ENCODE measurements at regions of chr10 and their contacts with region 1.

Region 1: DNA sequence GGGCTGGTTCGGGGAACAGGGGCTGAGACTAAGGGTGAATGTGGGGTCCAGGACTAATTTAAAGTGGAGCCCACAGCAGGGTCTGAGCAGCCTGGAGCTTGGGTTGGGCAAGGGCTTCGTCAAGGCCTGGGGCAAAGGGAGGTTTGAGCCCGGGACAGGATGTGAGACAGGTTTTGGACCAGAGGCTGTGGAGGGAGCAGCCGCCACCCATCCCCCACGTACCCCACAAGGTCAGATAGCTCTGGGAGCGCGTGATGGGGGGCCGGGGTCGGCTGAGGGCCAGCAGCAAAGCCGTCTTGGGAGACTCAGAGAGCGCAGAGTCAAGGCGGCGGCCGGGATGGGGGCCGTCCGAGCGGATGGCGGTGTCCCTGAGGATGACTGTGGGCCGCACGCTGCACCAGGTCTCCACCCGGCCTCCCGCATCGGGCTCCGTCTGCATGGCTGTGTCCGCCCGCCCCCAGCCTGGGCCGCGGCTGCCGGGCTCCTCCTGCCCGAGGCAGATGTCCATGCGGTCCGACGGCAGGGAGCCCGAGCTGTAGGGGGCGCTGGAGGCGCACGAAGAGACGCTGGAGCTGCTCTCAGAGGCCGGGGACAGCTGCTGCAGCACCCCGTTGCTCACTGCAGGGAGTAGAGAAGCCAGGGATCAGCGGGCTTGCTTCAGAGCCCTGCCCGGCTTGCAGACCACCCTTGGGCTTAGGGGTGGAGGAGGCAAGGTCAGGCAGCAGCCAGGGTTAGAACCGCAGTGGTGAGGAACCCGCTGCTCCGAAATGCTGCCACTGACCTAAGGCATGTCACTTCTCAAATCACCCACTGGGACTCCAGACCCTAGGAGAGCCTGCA is 12.1 kb downstream of the PDZD7 start:
- DNase-seq: no peak
- H3K4me3 ChIP-seq: no peak overlapping the region
- H3K27ac ChIP-seq: no peak overlapping the region
- H3K27me3 ChIP-seq: no peaks in the 10 kb centered on the region
- CTCF ChIP-seq: peak; percentile 78

Region 2: DNA sequence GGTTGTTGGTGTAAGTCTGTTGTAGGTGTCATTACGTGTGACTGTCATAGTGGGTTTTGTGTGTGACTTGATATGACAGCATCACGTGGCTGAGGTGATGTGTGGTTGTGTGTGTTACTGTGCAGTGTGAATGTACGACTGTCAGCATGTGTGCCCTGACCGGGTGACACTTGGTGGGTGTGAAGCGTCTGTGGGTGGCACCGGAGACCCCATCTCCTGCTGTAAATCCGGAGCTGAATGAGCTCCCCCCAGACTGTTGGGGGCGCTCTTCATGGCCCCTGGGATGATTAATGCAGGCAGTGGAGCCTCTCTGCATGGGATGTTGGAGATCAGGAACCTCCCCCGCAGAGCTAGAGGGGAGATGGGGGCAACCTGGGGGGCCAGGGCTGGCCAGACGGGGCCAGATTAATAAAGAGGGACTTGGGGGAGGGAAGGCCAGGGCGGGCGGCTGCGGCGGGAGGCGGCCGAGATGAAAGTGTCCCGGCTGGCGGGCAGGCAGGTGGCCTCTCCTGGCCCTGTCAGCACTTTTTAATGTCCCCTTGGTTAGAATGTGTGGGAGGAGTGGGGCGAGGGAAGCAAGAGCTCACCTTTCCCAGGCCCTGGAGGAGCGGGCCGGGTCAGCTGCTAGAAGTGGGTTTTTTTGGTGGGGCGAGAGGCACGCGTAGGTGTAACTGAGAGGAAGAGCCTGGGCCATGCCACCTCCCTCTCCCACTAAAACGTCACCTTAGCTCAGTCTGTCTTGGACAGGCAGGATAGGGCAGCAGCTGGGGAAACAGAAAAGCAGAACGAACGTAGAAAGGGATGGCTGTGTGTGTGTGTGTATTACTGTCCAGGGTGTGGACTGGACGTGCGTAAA is 449.0 kb before region 1 on chr10:
- CTCF ChIA-PET with region 1: no interaction called
- POLR2A ChIA-PET with region 1: no interaction called
- DNase-seq: no peak
- H3K4me3 ChIP-seq: no peak overlapping the region
- H3K27ac ChIP-seq: no peak overlapping the region
- H3K27me3 ChIP-seq: peaks cover 66% of the 10 kb centered on the region
- CTCF ChIP-seq: no peak

Region 3: DNA sequence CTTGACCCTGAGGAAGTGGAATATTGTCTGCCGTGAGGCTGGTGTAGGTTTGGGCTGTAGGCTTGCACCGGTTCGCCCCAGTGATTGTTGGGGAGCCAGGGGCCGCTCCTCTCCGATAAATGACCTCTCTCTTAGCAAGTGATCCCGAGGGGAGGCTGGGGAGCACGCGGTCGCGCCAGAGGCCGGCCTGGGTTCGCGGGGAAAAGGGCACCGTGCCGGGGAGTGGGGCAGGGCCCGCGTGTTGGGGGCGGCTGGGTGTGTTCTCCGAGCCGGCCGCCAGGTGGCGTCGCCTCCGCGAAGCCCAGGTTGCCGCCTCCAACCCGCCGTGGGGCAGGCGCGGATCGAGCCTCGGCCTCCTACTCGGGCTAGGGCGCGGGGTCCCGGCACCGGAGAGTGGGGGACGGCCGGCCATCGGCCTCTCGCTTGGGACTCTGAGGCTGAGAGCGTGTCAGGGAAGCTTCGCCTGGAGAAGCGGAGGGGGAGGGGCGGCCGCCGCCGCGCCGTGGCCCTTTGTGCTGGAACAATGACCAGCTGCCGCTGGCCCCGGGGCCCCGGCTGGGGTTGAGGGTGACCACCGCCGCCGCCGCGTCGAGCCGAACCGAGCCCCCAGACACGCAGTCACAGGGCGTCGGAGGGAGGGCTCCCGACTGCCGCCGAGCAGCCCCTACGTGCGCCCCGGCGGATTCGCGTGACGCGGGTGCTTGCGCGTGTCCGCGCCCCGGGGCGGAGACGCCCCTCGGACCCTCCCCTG is 19.7 kb before region 1 on chr10:
- CTCF ChIA-PET with region 1: interaction called, 271 read pairs
- POLR2A ChIA-PET with region 1: interaction called, 9 read pairs
- DNase-seq: no peak
- H3K4me3 ChIP-seq: peak overlapping the region; percentile 90
- H3K27ac ChIP-seq: peak overlapping the region; percentile 95
- H3K27me3 ChIP-seq: no peaks in the 10 kb centered on the region
- CTCF ChIP-seq: peak; percentile 76

Region 4: GRCh38 chr10:101031128-101031795 is 12.4 kb after region 1 on chr10 and contains the starts of genes PDZD7 and SFXN3:
- CTCF ChIA-PET with region 1: interaction called, 46 read pairs
- POLR2A ChIA-PET with region 1: interaction called, 4 read pairs
- DNase-seq: peak; percentile 83
- H3K4me3 ChIP-seq: peak within 1 kb of the TSS; percentile 96
- H3K27ac ChIP-seq: peak within 1 kb of the TSS; percentile 99
- H3K27me3 ChIP-seq: no peaks in the 10 kb centered on the region
- CTCF ChIP-seq: no peak
- polyA plus RNA-seq, gene PDZD7: 0.27 and 0.60 TPM in 2 replicates
- polyA plus RNA-seq, gene SFXN3: 77.8 and 87.0 TPM in 2 replicates

Region 5: GRCh38 chr10:101050208-101051069 is 31.6 kb after region 1 on chr10:
- CTCF ChIA-PET with region 1: interaction called, 15 read pairs
- POLR2A ChIA-PET with region 1: no interaction called
- DNase-seq: no peak
- H3K4me3 ChIP-seq: peak overlapping the region; percentile 39
- H3K27ac ChIP-seq: peak overlapping the region; percentile 11
- H3K27me3 ChIP-seq: peaks cover 17% of the 10 kb centered on the region
- CTCF ChIP-seq: peak; percentile 85

Region 6: GRCh38 chr10:101060036-101060950 is 41.5 kb after region 1 on chr10:
- CTCF ChIA-PET with region 1: interaction called, 32 read pairs
- POLR2A ChIA-PET with region 1: interaction called, 3 read pairs
- DNase-seq: peak; percentile 85
- H3K4me3 ChIP-seq: peak overlapping the region; percentile 100
- H3K27ac ChIP-seq: peak overlapping the region; percentile 98
- H3K27me3 ChIP-seq: no peaks in the 10 kb centered on the region
- CTCF ChIP-seq: peak; percentile 88

Region 7: GRCh38 chr10:101067356-101068083 is 48.7 kb after region 1 on chr10:
- CTCF ChIA-PET with region 1: interaction called, 32 read pairs
- POLR2A ChIA-PET with region 1: no interaction called
- DNase-seq: peak; percentile 55
- H3K4me3 ChIP-seq: peak overlapping the region; percentile 65
- H3K27ac ChIP-seq: peak overlapping the region; percentile 31
- H3K27me3 ChIP-seq: peaks cover 9% of the 10 kb centered on the region
- CTCF ChIP-seq: peak; percentile 90

Measured in AG04450 (cell line).